ENCODE measurements at regions of chr9 and their contacts with region 1.

Region 1: DNA sequence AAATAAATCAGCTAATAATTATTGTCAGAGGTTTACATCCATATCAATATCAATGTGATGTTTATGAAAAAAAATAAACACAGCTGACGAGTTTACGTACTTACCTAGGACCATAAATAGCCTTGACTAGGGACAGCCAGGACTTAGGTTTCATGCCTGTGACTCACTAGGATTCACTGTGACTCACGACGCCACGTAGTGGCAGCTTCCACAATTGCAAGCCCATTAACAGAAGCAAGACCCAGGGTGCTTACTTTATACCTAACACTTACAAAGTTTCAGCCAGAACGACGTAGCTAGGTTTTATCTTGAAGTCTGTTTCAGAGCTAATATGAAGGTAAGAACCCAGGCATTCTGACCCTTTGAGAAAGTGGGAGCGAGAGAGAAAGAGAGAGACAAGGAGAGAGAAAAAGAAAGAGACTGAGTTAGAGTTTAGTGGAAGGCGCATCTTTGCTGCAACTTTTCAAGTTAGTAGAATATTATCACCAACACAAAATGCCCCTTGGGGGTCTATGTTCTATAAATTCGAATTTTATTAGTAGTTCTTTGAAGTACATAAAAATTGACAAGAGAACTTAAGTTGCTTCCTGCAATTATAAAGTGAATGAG is 191.2 kb downstream of the GNA14 start:
- DNase-seq: peak; percentile 65 to 74 (median 72)
- H3K4me3 ChIP-seq: no peak overlapping the region
- H3K4me3 Mint-ChIP-seq: no peak overlapping the region
- H3K27ac ChIP-seq: no peak overlapping the region
- H3K27ac Mint-ChIP-seq: no peak overlapping the region
- H3K4me1 ChIP-seq: no peaks in the 10 kb centered on the region
- H3K4me1 Mint-ChIP-seq: peaks cover 8 to 22% (median 14%) of the 10 kb centered on the region in 4 donors
- H3K27me3 ChIP-seq: no peaks in the 10 kb centered on the region
- H3K27me3 Mint-ChIP-seq: peaks cover 0 to 1% of the 10 kb centered on the region in 2 donors

Region 2: GRCh38 chr9:77163884-77164283 is 293.0 kb before region 1 on chr9:
- CTCF ChIA-PET with region 1: interaction called, 47 read pairs
- POLR2A ChIA-PET with region 1: no interaction called
- intact Hi-C with region 1: loop called (anchors 1 kb)
- DNase-seq: no peak
- H3K4me3 ChIP-seq: no peak overlapping the region
- H3K4me3 Mint-ChIP-seq: no peak overlapping the region
- H3K27ac ChIP-seq: no peak overlapping the region
- H3K27ac Mint-ChIP-seq: no peak overlapping the region
- H3K4me1 ChIP-seq: no peaks in the 10 kb centered on the region
- H3K4me1 Mint-ChIP-seq: peaks cover 0 to 4% (median 2%) of the 10 kb centered on the region in 4 donors
- H3K27me3 ChIP-seq: no peaks in the 10 kb centered on the region
- H3K27me3 Mint-ChIP-seq: peaks cover 5 to 7% of the 10 kb centered on the region in 2 donors

Region 3: GRCh38 chr9:77328102-77328501 is 128.8 kb before region 1 on chr9:
- CTCF ChIA-PET with region 1: no interaction called
- POLR2A ChIA-PET with region 1: no interaction called
- intact Hi-C with region 1: no loop called
- DNase-seq: no peak
- H3K4me3 ChIP-seq: no peak overlapping the region
- H3K4me3 Mint-ChIP-seq: no peak overlapping the region
- H3K27ac ChIP-seq: no peak overlapping the region
- H3K27ac Mint-ChIP-seq: peak overlapping the region in 1 of 7 donors; percentile 4
- H3K4me1 ChIP-seq: no peaks in the 10 kb centered on the region
- H3K4me1 Mint-ChIP-seq: peaks cover 0 to 2% (median 0%) of the 10 kb centered on the region in 4 donors
- H3K27me3 ChIP-seq: no peaks in the 10 kb centered on the region
- H3K27me3 Mint-ChIP-seq: no peaks in the 10 kb centered on the region

Region 4: DNA sequence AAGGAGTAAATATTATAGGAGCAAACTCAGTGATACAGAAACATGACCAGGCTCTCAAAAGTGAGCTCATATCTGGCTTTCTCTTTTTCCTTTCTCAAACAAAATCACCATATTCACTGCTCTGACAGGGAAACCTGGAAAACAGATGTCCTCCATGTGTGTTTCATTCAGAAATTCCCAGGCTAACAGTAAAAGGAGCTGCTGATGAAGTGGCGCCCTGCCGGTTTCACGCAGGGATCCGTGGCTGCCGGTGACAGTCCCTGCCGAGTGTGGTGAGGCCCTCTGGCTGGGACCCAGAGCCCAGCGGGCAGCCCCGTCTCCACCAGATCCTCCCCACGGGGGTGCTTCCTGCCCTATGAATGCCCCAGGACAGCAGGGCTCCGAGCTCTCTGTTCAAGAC is 16.9 kb before region 1 on chr9:
- CTCF ChIA-PET with region 1: interaction called, 107 read pairs
- POLR2A ChIA-PET with region 1: no interaction called
- intact Hi-C with region 1: no loop called
- DNase-seq: no peak
- H3K4me3 ChIP-seq: no peak overlapping the region
- H3K4me3 Mint-ChIP-seq: no peak overlapping the region
- H3K27ac ChIP-seq: no peak overlapping the region
- H3K27ac Mint-ChIP-seq: no peak overlapping the region
- H3K4me1 ChIP-seq: no peaks in the 10 kb centered on the region
- H3K4me1 Mint-ChIP-seq: no peaks in the 10 kb centered on the region
- H3K27me3 ChIP-seq: no peaks in the 10 kb centered on the region
- H3K27me3 Mint-ChIP-seq: peaks cover 0 to 7% of the 10 kb centered on the region in 2 donors

Region 5: GRCh38 chr9:77475641-77476473 is 18.9 kb after region 1 on chr9:
- CTCF ChIA-PET with region 1: interaction called, 34 read pairs
- POLR2A ChIA-PET with region 1: no interaction called
- intact Hi-C with region 1: no loop called
- DNase-seq: peak; percentile 31 to 54 (median 47)
- H3K4me3 ChIP-seq: no peak overlapping the region
- H3K4me3 Mint-ChIP-seq: peak overlapping the region in 7 of 8 donors; percentile 37 to 70 (median 63)
- H3K27ac ChIP-seq: peak overlapping the region; percentile 33
- H3K27ac Mint-ChIP-seq: peak overlapping the region; percentile 88 to 98 (median 93)
- H3K4me1 ChIP-seq: peaks cover 18% of the 10 kb centered on the region
- H3K4me1 Mint-ChIP-seq: peaks cover 15 to 21% (median 19%) of the 10 kb centered on the region in 4 donors
- H3K27me3 ChIP-seq: no peaks in the 10 kb centered on the region
- H3K27me3 Mint-ChIP-seq: no peaks in the 10 kb centered on the region

Region 6: GRCh38 chr9:77751341-77752091 is 294.6 kb after region 1 on chr9:
- CTCF ChIA-PET with region 1: no interaction called
- POLR2A ChIA-PET with region 1: no interaction called
- intact Hi-C with region 1: loop called (anchors 10 kb)
- DNase-seq: peak in 2 of 5 donors; percentile 9 to 25
- H3K4me3 ChIP-seq: no peak overlapping the region
- H3K4me3 Mint-ChIP-seq: no peak overlapping the region
- H3K27ac ChIP-seq: no peak overlapping the region
- H3K27ac Mint-ChIP-seq: peak overlapping the region in 5 of 7 donors; percentile 0 to 50 (median 41)
- H3K4me1 ChIP-seq: no peaks in the 10 kb centered on the region
- H3K4me1 Mint-ChIP-seq: peaks cover 16 to 50% (median 31%) of the 10 kb centered on the region in 4 donors
- H3K27me3 ChIP-seq: no peaks in the 10 kb centered on the region
- H3K27me3 Mint-ChIP-seq: no peaks in the 10 kb centered on the region

Region 7: GRCh38 chr9:77977210-77977611 is 520.3 kb after region 1 on chr9:
- CTCF ChIA-PET with region 1: no interaction called
- POLR2A ChIA-PET with region 1: no interaction called
- intact Hi-C with region 1: loop called (anchors 10 kb)
- DNase-seq: peak in 4 of 5 donors; percentile 37 to 53 (median 48)
- H3K4me3 ChIP-seq: peak overlapping the region in 1 of 2 donors; percentile 21
- H3K4me3 Mint-ChIP-seq: peak overlapping the region in 7 of 8 donors; percentile 3 to 73 (median 62)
- H3K27ac ChIP-seq: no peak overlapping the region
- H3K27ac Mint-ChIP-seq: peak overlapping the region; percentile 1 to 92 (median 43)
- H3K4me1 ChIP-seq: peaks cover 53% of the 10 kb centered on the region
- H3K4me1 Mint-ChIP-seq: peaks cover 42 to 73% (median 58%) of the 10 kb centered on the region in 4 donors
- H3K27me3 ChIP-seq: no peaks in the 10 kb centered on the region
- H3K27me3 Mint-ChIP-seq: no peaks in the 10 kb centered on the region

Region 8: GRCh38 chr9:78121488-78121887 is 664.6 kb after region 1 on chr9:
- CTCF ChIA-PET with region 1: interaction called, 30 read pairs
- POLR2A ChIA-PET with region 1: no interaction called
- intact Hi-C with region 1: loop called (anchors 1 kb)
- DNase-seq: peak in 4 of 5 donors; percentile 44 to 56 (median 48)
- H3K4me3 ChIP-seq: no peak overlapping the region
- H3K4me3 Mint-ChIP-seq: no peak overlapping the region
- H3K27ac ChIP-seq: no peak overlapping the region
- H3K27ac Mint-ChIP-seq: peak overlapping the region; percentile 58 to 82 (median 69)
- H3K4me1 ChIP-seq: peaks cover 36% of the 10 kb centered on the region
- H3K4me1 Mint-ChIP-seq: peaks cover 30 to 53% (median 42%) of the 10 kb centered on the region in 4 donors
- H3K27me3 ChIP-seq: no peaks in the 10 kb centered on the region
- H3K27me3 Mint-ChIP-seq: no peaks in the 10 kb centered on the region